Posterior vena cava (tissue), 2 donors: ENCODE measurements at regions of chr7 and their contacts with region 1.

Region 1: GRCh38 chr7:148962823-148963582 is 65.3 kb downstream of the PDIA4 start:
- DNase-seq: peak; percentile 84

Region 2: DNA sequence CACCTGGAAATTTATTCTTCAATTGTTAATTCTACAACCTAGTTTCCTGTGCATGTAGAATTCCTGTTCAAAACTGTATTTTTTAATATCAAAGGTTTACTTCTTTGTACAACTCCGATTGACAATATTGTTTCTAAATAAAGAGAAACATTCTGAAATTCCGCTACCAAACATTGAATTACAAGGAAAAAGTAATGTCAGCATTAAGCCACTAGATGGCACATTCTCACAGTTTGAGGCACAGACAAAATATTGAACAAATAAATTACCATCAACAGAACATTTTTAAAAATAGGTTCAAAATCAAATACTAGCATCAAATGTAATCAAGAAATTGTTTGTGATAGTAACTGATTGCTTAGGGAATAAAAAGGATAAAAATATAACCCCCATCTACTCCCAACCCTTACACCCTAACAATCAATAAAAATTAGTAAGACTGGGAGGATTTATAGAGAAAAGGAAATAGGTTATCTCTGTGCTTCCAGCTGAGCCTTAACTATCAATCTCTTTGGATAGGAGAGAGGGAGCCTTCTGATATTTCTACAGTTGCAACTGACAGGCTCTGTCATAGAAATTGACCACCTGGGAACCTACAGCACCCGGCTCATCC is 459.0 kb before region 1 on chr7:
- intact Hi-C with region 1: loop called (anchors 5 to 10 kb)
- DNase-seq: no peak

Region 3: DNA sequence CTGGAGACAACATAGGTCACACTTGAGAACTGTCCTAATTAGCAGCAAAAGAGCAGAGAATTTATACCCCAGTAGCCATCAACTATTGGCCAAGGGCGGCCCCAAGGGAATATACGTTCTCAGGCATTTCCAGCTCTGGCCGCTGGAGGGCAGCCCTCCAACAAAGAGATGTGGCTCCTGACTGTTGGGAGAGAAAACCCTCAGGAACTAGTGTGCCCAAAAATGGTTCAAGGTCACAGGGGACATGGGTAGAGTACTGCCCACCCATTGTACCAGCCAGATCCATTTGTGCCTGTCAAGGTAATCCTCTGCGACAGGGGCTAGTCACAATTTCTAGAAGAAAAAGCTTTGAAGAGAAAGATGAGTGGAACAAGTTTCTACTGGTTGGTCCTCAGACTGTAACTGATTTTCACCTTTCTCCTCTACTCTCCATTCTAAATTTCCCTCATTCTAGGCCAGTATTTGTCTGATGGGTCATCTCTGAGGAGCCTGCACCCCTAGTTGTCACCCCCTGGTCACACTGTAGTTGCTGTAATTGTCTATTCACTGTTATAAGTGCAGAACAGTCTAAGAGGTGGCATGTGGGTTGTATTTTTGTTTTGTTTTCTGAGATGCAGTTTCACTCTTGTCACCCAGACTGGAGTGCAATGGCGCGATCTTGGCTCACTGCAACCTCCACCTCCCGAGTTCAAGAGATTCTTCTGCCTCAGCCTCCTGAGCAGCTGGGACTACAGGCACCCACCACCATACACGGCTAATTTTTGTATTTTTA is 387.2 kb before region 1 on chr7:
- intact Hi-C with region 1: loop called in 1 of 2 experiments (anchors 10 kb)
- DNase-seq: peak; percentile 87

Region 4: GRCh38 chr7:148698397-148699023 is 264.5 kb before region 1 on chr7 and contains the start of gene CUL1:
- intact Hi-C with region 1: loop called in 1 of 2 experiments (anchors 10 kb)
- DNase-seq: peak; percentile 95
- total RNA-seq, gene CUL1: 38.3 to 50.2 TPM

Region 5: DNA sequence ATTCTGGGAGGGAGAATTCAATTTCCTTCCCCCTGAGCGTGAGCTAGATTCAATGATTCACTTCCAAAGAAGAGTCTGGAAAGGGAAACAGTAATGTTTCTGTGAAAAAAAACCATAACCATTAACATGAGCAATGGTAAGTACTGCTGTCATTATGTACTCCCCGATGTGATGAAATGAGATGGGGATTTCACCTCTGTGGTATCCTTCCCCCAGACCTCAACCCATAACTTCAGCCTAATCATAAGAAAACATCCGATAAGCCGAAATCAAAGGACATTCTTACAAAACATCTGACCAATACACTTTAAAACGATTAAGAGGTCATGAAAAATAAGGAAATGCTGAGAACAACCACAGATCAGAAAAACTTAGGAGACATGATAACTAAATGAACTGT is 106.1 kb before region 1 on chr7:
- intact Hi-C with region 1: loop called in 1 of 2 experiments (anchors 10 kb)
- DNase-seq: no peak